ENCODE measurements at regions of chr10 and their contacts with region 1.

Region 1: GRCh38 chr10:119750391-119751230 is 24.8 kb downstream of the INPP5F start:
- DNase-seq: no peak
- ATAC-seq: peak; percentile 96
- H3K4me3 Mint-ChIP-seq: peak overlapping the region; percentile 69
- H3K27ac Mint-ChIP-seq: peak overlapping the region; percentile 86
- H3K4me1 Mint-ChIP-seq: peaks cover 43% of the 10 kb centered on the region
- H3K27me3 Mint-ChIP-seq: no peaks in the 10 kb centered on the region
- CTCF ChIP-seq: peak; percentile 38

Region 2: DNA sequence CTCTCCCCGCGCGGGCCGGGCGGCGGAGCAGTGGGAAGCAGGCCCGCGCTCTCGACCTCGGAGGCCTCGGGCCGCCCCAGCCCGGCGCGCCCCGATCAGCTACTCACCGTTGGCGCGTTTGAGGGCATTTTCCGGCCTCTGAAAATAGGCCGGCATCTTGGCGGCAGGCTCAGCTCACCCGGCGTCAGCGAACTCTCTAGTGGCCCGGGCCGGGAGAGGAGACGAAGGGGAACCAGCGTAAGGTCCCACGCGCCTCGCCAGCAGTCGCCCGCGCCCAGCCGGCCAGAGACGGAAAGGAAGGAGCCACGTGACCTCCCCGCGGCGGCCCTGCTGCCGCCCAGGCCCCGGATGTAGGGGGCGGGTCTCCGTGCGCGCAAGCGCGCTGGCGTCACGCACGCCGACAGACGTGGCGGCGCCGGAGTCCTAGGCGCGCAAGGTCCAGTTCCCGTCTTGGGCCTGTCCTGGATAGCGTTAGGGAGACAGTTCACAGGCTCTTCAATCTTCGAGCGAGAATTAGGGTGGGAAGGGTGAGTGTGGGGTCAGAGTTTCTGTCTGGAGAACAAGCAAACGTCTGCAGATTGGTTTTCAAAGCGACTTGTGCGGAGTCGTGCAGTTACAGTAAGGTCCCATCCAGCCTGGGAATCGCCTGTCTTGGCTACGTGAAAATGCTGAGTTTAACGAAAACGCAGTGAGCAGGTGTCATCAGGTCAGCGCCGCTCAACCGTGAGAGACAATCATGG is 669.9 kb before region 1 on chr10 and contains the start of gene EIF3A:
- CTCF ChIA-PET with region 1: no interaction called
- POLR2A ChIA-PET with region 1: no interaction called
- intact Hi-C with region 1: no loop called
- DNase-seq: peak; percentile 97
- ATAC-seq: peak; percentile 79
- H3K4me3 Mint-ChIP-seq: peak within 1 kb of the TSS; percentile 89
- H3K27ac Mint-ChIP-seq: peak within 1 kb of the TSS; percentile 93
- H3K4me1 Mint-ChIP-seq: peaks cover 49% of the 10 kb centered on the region
- H3K27me3 Mint-ChIP-seq: no peaks in the 10 kb centered on the region
- CTCF ChIP-seq: no peak
- total RNA-seq, gene EIF3A: 109 and 114 TPM in 2 replicates

Region 3: GRCh38 chr10:119616882-119617570 is 133.6 kb before region 1 on chr10:
- CTCF ChIA-PET with region 1: no interaction called
- POLR2A ChIA-PET with region 1: no interaction called
- intact Hi-C with region 1: no loop called
- DNase-seq: no peak
- ATAC-seq: no peak
- H3K4me3 Mint-ChIP-seq: no peak overlapping the region
- H3K27ac Mint-ChIP-seq: no peak overlapping the region
- H3K4me1 Mint-ChIP-seq: peaks cover 4% of the 10 kb centered on the region
- H3K27me3 Mint-ChIP-seq: peaks cover 3% of the 10 kb centered on the region
- CTCF ChIP-seq: no peak

Region 4: DNA sequence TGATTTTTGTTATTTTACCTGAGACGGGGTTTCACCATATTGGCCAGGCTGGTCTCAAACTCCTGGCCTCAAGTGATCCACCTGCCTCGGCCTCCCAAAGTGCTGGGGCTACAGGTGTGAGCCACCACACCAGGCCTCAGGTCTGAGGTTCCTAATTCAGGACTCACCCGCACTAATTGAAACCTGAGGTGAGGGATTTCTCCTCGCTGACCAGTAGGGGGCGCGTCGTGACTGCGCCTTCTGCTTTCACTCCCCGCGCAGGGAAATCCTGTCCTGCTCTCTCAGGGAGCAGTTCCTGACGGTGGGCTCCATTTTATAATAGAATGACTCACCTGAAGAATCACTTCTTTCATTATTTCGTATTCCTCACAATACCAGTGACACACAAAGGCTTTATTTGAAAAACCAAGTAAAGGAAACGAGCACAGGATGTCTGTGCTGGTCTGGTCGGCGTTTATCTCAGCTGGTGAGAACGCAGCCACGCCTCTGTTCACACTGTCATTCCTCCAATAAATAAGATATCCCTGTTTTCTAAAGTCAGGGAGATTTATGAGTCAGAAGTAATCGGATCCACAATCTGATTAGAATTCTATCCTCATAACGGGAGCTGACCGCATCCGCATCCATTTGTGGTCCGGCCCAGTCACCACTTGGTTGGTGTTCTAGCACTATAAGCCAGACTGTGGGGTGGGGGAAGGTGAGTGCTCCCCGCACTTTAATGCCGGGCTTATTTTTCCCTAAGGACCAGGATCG is 64.0 kb before region 1 on chr10:
- CTCF ChIA-PET with region 1: interaction called, 90 read pairs
- POLR2A ChIA-PET with region 1: interaction called, 7 read pairs
- intact Hi-C with region 1: loop called (anchors 1 kb)
- DNase-seq: peak; percentile 68
- ATAC-seq: peak; percentile 93
- H3K4me3 Mint-ChIP-seq: peak overlapping the region; percentile 71
- H3K27ac Mint-ChIP-seq: peak overlapping the region; percentile 77
- H3K4me1 Mint-ChIP-seq: peaks cover 28% of the 10 kb centered on the region
- H3K27me3 Mint-ChIP-seq: peaks cover 3% of the 10 kb centered on the region
- CTCF ChIP-seq: peak; percentile 93

Region 5: DNA sequence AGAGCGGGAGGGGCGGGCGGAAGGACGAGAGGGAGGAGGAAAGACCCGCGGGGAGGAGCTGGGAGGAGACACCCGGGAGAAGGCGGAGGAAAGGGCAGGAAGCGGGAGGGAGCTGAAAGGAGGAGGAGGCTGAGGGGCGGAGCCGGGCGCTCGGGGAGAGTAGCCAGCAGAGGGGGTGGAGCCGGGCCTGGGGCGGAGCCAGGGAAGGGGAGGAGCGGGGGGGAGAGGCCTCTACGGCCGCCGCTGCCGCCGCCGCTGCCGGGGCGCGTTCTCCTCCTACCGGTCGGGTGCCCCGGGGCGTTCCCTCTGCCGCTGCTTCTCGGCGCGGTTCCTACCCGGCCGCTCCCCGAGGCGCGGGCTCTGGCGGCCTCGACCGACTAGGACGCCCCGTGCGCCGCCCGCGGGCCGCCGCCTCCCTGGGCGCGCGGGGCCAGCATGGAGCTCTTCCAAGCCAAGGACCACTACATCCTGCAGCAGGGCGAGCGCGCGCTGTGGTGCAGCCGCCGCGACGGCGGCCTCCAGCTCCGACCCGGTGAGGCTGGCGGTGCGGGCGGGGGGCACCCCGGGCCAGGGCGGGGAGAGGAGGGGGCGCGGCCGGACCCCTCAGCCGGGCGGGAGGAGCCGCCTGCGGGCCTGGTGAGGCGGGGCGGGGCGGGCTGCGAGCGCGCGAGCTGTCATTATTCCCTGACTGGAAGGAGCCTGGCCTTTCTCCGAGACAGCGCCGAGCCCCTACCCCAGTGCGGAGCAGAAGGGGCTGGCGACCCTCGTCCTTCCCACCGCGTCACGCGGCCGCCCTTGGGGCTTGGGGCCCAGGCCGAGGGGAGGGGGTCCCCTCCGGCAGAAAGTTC is 24.6 kb before region 1 on chr10 and contains the start of gene INPP5F:
- CTCF ChIA-PET with region 1: interaction called, 21 read pairs
- POLR2A ChIA-PET with region 1: interaction called, 8 read pairs
- intact Hi-C with region 1: loop called (anchors 1 kb)
- DNase-seq: peak; percentile 96
- ATAC-seq: peak; percentile 92
- H3K4me3 Mint-ChIP-seq: peak within 1 kb of the TSS; percentile 92
- H3K27ac Mint-ChIP-seq: peak within 1 kb of the TSS; percentile 81
- H3K4me1 Mint-ChIP-seq: peaks cover 57% of the 10 kb centered on the region
- H3K27me3 Mint-ChIP-seq: no peaks in the 10 kb centered on the region
- CTCF ChIP-seq: no peak
- total RNA-seq, gene INPP5F: 45.9 and 53.5 TPM in 2 replicates

Region 6: GRCh38 chr10:119761106-119761505 is 10.5 kb after region 1 on chr10:
- CTCF ChIA-PET with region 1: interaction called, 12 read pairs
- POLR2A ChIA-PET with region 1: no interaction called
- intact Hi-C with region 1: no loop called
- DNase-seq: no peak
- ATAC-seq: no peak
- H3K4me3 Mint-ChIP-seq: no peak overlapping the region
- H3K27ac Mint-ChIP-seq: no peak overlapping the region
- H3K4me1 Mint-ChIP-seq: peaks cover 12% of the 10 kb centered on the region
- H3K27me3 Mint-ChIP-seq: no peaks in the 10 kb centered on the region
- CTCF ChIP-seq: no peak

Region 7: GRCh38 chr10:119807960-119808697 is 57.5 kb after region 1 on chr10:
- CTCF ChIA-PET with region 1: interaction called, 6 read pairs
- POLR2A ChIA-PET with region 1: interaction called, 3 read pairs
- intact Hi-C with region 1: loop called (anchors 5 kb)
- DNase-seq: no peak
- ATAC-seq: peak; percentile 31
- H3K4me3 Mint-ChIP-seq: no peak overlapping the region
- H3K27ac Mint-ChIP-seq: peak overlapping the region; percentile 61
- H3K4me1 Mint-ChIP-seq: peaks cover 14% of the 10 kb centered on the region
- H3K27me3 Mint-ChIP-seq: no peaks in the 10 kb centered on the region
- CTCF ChIP-seq: no peak

Region 8: GRCh38 chr10:119917750-119918149 is 167.1 kb after region 1 on chr10:
- CTCF ChIA-PET with region 1: interaction called, 3 read pairs
- POLR2A ChIA-PET with region 1: no interaction called
- intact Hi-C with region 1: loop called (anchors 2 kb)
- DNase-seq: no peak
- ATAC-seq: no peak
- H3K4me3 Mint-ChIP-seq: no peak overlapping the region
- H3K27ac Mint-ChIP-seq: no peak overlapping the region
- H3K4me1 Mint-ChIP-seq: peaks cover 23% of the 10 kb centered on the region
- H3K27me3 Mint-ChIP-seq: no peaks in the 10 kb centered on the region
- CTCF ChIP-seq: no peak

Measured in activated B cell treated with CpG ODN at 0.5 μM for 24 hours (primary cell).